ENCODE measurements at regions of chr11 and their contacts with region 1.

Region 1: DNA sequence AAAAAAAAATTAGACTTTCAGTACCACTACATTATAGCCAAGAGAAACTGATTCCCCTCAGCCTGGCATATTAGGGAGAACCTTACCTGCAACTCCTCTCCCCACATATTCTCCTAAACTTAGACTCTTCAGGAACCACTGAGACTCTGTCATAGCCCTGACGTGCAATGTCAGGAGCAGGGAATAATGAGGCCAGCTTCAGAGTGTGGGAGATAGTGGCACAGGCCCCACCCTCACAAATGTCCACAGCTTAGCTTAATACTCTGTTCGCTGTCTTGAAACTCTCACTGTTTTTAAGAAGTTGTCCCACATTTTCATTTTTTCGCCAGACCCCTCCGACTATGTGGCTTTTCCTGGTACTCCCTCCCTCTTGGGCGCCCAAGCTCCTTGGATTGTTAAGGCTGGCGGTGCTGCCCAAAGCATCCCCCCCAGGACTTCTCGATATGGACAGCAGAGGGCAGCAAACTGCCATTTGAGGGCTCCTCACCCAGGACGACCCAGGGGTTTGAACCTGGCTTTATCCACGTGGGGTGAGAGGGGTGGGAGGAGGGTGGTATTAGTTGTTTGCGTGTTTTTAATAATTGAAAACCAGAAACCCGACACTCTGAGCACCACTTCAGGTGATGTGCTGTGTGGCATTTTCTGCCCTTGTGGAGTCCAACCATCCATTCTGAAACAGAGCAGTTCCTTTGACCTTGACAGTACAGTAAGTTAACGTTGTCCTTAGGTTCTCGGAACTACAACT is 45.2 kb upstream of the RASSF10 start:
- DNase-seq: no peak
- ATAC-seq: peak; percentile 98
- H3K4me3 ChIP-seq: no peak overlapping the region
- H3K27ac ChIP-seq: no peak overlapping the region
- H3K4me1 ChIP-seq: no peaks in the 10 kb centered on the region
- H3K27me3 ChIP-seq: peaks cover 8% of the 10 kb centered on the region; the same call in 1 of the 2 replicates
- CTCF ChIP-seq: peak; percentile 89

Region 2: DNA sequence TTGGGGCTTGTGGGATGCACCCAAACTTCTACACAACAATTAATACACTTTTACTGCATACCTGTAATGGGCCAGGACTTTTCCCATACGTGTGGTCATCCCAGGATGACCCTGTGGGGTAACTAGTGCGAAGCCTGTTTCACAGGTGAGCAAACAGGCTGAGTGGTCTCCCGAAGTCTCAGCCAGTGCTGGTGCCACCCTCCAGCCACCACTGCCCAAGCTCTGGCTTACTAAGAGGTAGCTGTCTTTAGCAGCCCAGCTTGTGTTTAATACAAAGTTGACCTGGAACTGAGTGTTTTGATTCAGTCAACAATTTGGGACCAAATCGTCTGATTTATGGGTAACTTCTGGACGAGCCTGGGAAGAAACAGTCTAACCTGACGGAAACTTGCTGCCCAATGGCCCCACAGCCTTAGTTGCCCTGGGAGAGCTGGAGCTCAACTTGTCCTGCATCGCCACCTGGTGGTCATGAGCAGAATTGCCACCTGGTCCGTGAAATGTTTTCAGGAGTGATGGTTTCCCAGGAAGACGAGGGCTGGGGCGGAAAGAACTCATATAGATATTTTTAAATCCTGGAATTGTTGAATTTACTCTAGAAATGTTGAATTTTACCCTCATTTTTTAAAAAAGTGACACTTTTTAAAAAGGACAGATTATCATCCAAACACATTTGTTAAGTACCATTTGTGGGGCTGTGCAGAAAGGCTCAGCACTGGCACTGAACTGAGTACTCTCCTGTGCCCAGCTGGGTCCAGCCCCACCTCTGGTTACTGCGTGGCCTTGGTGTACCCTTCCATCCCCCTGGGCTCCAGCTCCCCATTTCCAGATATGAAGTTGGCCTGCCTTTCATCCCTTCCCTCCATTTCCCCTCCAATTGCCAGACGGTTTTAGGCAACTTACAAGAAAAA is 682.1 kb before region 1 on chr11:
- CTCF ChIA-PET with region 1: interaction called, 10 read pairs
- POLR2A ChIA-PET with region 1: no interaction called
- in situ Hi-C with region 1: no loop called
- intact Hi-C with region 1: no loop called
- DNase-seq: peak; percentile 67
- ATAC-seq: peak; percentile 78
- H3K4me3 ChIP-seq: no peak overlapping the region
- H3K27ac ChIP-seq: peak overlapping the region; percentile 56
- H3K4me1 ChIP-seq: peaks cover 25% of the 10 kb centered on the region
- H3K27me3 ChIP-seq: no peaks in the 10 kb centered on the region
- CTCF ChIP-seq: peak; percentile 94

Region 3: GRCh38 chr11:12331239-12331874 is 632.6 kb before region 1 on chr11:
- CTCF ChIA-PET with region 1: interaction called, 11 read pairs
- POLR2A ChIA-PET with region 1: no interaction called
- in situ Hi-C with region 1: no loop called
- intact Hi-C with region 1: no loop called
- DNase-seq: peak; percentile 71
- ATAC-seq: peak; percentile 94
- H3K4me3 ChIP-seq: no peak overlapping the region
- H3K27ac ChIP-seq: no peak overlapping the region
- H3K4me1 ChIP-seq: no peaks in the 10 kb centered on the region
- H3K27me3 ChIP-seq: no peaks in the 10 kb centered on the region
- CTCF ChIP-seq: peak; percentile 85

Region 4: GRCh38 chr11:13145461-13145860 is 181.5 kb after region 1 on chr11:
- CTCF ChIA-PET with region 1: no interaction called
- POLR2A ChIA-PET with region 1: no interaction called
- in situ Hi-C with region 1: no loop called
- intact Hi-C with region 1: loop called (anchors 5 kb)
- DNase-seq: no peak
- ATAC-seq: no peak
- H3K4me3 ChIP-seq: no peak overlapping the region
- H3K27ac ChIP-seq: no peak overlapping the region
- H3K4me1 ChIP-seq: no peaks in the 10 kb centered on the region
- H3K27me3 ChIP-seq: 0 out of 2 replicates have a peak, but pooled peaks cover 4% of the 10 kb centered on the region
- CTCF ChIP-seq: no peak

Region 5: DNA sequence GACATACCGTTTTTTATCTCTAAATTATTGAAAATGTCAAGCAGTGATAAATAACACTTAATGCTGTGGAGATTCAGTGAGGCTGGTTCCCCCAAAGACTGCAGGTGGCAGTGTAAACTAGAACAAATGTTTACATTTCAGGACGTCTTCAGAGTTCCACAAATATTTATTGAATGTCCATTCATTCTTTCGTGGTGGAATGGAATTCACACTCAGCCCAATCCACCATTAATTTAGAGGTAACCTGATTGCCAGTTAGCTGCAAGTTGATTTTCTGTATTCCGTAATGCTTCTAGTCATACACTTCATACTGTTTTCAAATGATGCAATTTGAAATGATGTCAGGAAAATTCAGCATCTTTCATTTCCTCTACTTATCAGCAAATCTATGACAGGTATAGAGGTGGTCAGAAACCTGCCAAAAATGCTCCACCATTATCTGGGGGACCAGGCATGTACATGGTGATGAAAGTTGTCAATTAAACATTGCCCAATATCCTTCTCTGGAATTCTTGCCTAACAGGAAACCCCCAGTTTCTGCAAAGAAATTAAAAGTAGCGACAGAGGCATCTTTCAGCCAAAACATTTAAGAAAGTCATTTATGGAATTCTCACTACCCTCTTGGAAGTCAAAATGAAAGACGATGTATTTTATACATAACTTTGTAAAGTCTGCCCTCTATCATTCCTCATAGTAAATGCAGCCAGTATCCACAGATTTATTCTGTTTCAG is 219.3 kb after region 1 on chr11:
- CTCF ChIA-PET with region 1: no interaction called
- POLR2A ChIA-PET with region 1: no interaction called
- in situ Hi-C with region 1: no loop called
- intact Hi-C with region 1: loop called (anchors 5 kb)
- DNase-seq: peak; percentile 24
- ATAC-seq: peak; percentile 78
- H3K4me3 ChIP-seq: no peak overlapping the region
- H3K27ac ChIP-seq: no peak overlapping the region
- H3K4me1 ChIP-seq: no peaks in the 10 kb centered on the region
- H3K27me3 ChIP-seq: no peaks in the 10 kb centered on the region; the same call in 1 of the 2 replicates
- CTCF ChIP-seq: peak; percentile 52; the same call in 1 of the 2 replicates

Region 6: DNA sequence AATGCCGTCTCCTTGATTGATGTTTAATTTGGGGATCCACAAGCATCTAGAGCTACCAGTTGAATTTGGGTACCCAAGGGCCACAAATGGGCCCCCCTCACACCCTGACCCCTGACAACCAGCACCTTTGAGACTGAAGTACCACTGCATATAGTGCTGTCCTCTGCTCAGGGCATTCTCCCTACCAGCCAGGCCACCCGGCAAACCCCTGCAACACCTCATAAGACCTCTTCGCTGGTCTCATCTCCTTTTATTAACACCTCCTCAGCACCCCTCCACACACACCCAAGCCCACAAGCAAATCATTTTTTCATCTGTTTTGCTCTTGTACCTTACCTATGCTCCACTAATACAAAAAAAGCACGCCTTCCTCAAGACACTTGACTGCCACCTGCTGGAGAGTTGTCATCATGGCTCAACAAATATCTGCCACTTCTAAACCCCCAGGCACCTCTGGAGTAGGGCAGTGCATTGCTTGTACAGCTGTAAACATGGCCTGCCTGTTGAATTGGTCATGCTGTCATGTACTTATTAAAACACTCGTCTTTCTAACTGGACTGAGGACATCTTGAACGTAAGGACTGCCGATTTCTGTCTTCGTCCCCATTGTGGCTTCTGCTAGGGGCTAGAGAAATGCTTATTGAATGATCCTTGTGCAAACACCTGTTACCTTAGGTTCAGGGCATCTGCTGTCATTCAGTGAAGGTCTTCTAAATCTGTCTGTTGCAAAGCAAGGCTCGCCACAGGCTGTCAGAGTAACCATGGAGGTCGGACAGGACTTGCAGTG is 380.2 kb after region 1 on chr11:
- CTCF ChIA-PET with region 1: no interaction called
- POLR2A ChIA-PET with region 1: no interaction called
- in situ Hi-C with region 1: no loop called
- intact Hi-C with region 1: loop called (anchors 2 kb)
- DNase-seq: peak; percentile 69
- ATAC-seq: peak; percentile 73
- H3K4me3 ChIP-seq: no peak overlapping the region
- H3K27ac ChIP-seq: no peak overlapping the region
- H3K4me1 ChIP-seq: 0 out of 2 replicates have a peak, but pooled peaks cover 5% of the 10 kb centered on the region
- H3K27me3 ChIP-seq: no peaks in the 10 kb centered on the region
- CTCF ChIP-seq: peak; percentile 88